PC-9 (cell line): ENCODE measurements at regions of chr7 and their contacts with region 1.

Region 1: GRCh38 chr7:44322631-44323363 is 2.6 kb downstream of the CAMK2B start:
- DNase-seq: no peak
- H3K4me3 ChIP-seq: no peak overlapping the region
- H3K27ac ChIP-seq: no peak overlapping the region
- H3K4me1 ChIP-seq: no peaks in the 10 kb centered on the region
- H3K27me3 ChIP-seq: peaks cover 34% of the 10 kb centered on the region
- CTCF ChIP-seq: no peak

Region 2: DNA sequence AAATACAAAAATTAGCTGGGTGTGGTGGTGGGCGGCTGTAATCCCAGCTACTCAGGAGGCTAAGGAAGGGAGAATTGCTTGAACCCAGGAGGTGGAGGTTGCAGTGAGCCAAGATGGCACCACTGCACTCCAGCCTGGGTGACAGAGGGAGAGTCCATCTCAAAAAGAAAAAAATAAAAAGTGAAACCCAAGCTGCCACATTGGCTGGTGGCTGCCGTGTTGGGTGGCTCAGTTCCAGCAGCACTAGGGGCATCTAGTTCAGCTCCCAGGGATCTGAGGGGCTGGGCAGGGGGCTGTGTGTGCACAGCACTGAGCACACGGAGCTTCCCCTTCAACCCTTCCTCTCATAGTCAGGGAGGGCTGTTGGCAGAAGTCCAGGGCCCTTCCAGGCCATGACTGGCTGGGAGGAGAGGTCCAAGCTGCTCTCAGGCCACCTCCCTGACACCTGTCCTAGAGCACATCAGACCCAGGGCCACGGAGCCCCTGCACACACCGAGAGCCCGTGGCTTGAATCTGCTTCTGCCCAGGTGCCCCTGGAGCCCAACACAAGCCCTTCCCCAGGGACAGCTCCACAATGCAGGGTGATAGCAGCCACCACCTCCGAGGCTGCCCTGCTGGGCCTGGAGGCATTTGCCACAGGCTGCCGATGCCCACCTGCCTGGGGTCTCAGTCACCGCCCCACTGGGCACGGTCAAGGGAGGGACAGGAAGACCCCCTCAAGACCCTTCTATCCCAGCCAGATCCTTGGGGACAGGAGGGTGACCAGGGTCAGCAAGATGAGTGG is 74.7 kb before region 1 on chr7:
- CTCF ChIA-PET with region 1: no interaction called
- POLR2A ChIA-PET with region 1: no interaction called
- intact Hi-C with region 1: no loop called
- DNase-seq: no peak
- H3K4me3 ChIP-seq: no peak overlapping the region
- H3K27ac ChIP-seq: no peak overlapping the region
- H3K4me1 ChIP-seq: no peaks in the 10 kb centered on the region
- H3K27me3 ChIP-seq: no peaks in the 10 kb centered on the region
- CTCF ChIP-seq: no peak

Region 3: GRCh38 chr7:44269943-44270493 is 52.8 kb before region 1 on chr7:
- CTCF ChIA-PET with region 1: no interaction called
- POLR2A ChIA-PET with region 1: interaction called, 17 read pairs
- intact Hi-C with region 1: no loop called
- DNase-seq: no peak
- H3K4me3 ChIP-seq: no peak overlapping the region
- H3K27ac ChIP-seq: no peak overlapping the region
- H3K4me1 ChIP-seq: no peaks in the 10 kb centered on the region
- H3K27me3 ChIP-seq: peaks cover 13% of the 10 kb centered on the region; the same call in 1 of the 2 replicates
- CTCF ChIP-seq: no peak